ENCODE measurements at regions of chr14 and their contacts with region 1.

Region 1: GRCh38 chr14:61388173-61388975 is 67.0 kb downstream of the PRKCH start:
- DNase-seq: peak in 4 of 14 experiments; percentile 26 to 78 (median 62)
- ATAC-seq: peak; percentile 77
- H3K4me3 ChIP-seq: peak overlapping the region; percentile 25
- H3K4me3 Mint-ChIP-seq: no peak overlapping the region
- H3K27ac ChIP-seq: peak overlapping the region; percentile 72
- H3K27ac Mint-ChIP-seq: no peak overlapping the region
- H3K4me1 ChIP-seq: peaks cover 72% of the 10 kb centered on the region
- H3K4me1 Mint-ChIP-seq: peaks cover 39% of the 10 kb centered on the region
- H3K27me3 ChIP-seq: no peaks in the 10 kb centered on the region
- H3K27me3 Mint-ChIP-seq: no peaks in the 10 kb centered on the region
- CTCF ChIP-seq: no peak

Region 2: DNA sequence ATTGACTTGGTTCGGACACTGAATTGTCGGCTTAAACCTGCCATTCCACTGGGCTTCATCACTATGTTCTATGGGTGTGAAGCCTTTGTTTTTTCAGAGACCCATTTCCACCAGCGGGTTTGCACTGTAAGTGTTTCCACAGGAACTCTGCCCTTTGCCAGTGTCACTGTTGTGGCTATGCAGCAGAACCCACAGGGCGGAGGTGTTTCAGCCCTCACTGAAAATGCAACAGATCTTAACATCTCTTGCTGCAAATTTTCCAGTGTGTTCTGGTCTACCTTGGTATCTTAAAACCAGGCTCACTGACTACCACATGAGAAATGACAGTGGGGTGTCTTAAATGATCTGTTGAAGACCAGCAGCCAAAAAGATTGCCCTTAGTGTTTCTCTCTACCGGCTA is 45.9 kb before region 1 on chr14:
- CTCF ChIA-PET with region 1: interaction called, 5 read pairs
- POLR2A ChIA-PET with region 1: interaction called, 15 read pairs
- intact Hi-C with region 1: loop called in 1 of 2 experiments (anchors 1 kb)
- DNase-seq: peak; percentile 60 to 93 (median 76)
- ATAC-seq: peak; percentile 57
- H3K4me3 ChIP-seq: peak overlapping the region; percentile 23
- H3K4me3 Mint-ChIP-seq: peak overlapping the region; percentile 87
- H3K27ac ChIP-seq: peak overlapping the region; percentile 79 to 88
- H3K27ac Mint-ChIP-seq: peak overlapping the region; percentile 99
- H3K4me1 ChIP-seq: peaks cover 90% of the 10 kb centered on the region
- H3K4me1 Mint-ChIP-seq: peaks cover 92% of the 10 kb centered on the region
- H3K27me3 ChIP-seq: no peaks in the 10 kb centered on the region
- H3K27me3 Mint-ChIP-seq: no peaks in the 10 kb centered on the region
- CTCF ChIP-seq: no peak

Region 3: DNA sequence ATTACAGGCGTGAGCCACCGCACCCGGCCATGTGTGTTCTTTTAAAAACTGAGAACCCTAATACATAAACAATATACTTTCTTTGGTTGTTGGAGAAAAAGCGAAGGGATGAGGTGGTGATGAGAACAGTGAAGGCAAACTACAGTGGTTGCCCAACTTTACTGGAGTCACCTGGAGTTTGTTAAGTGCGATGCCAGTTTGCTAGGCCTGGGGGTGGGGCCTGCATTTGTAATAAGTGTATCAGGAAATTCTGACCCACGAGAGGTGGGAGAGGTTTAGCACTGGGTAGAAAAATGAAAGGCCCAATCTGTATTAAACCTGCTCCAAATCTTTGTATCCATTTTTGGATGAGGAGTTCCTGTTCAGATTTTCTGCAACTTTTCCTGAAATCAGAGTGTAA is 18.2 kb before region 1 on chr14:
- CTCF ChIA-PET with region 1: interaction called, 3 read pairs
- POLR2A ChIA-PET with region 1: interaction called, 7 read pairs
- intact Hi-C with region 1: loop called in 1 of 2 experiments (anchors 2 kb)
- DNase-seq: no peak
- ATAC-seq: no peak
- H3K4me3 ChIP-seq: no peak overlapping the region
- H3K4me3 Mint-ChIP-seq: peak overlapping the region; percentile 21
- H3K27ac ChIP-seq: peak overlapping the region in 1 of 2 donors; percentile 2
- H3K27ac Mint-ChIP-seq: peak overlapping the region; percentile 81
- H3K4me1 ChIP-seq: peaks cover 51% of the 10 kb centered on the region
- H3K4me1 Mint-ChIP-seq: peaks cover 34% of the 10 kb centered on the region
- H3K27me3 ChIP-seq: no peaks in the 10 kb centered on the region
- H3K27me3 Mint-ChIP-seq: no peaks in the 10 kb centered on the region
- CTCF ChIP-seq: no peak

Region 4: GRCh38 chr14:61403411-61403810 is 15.0 kb after region 1 on chr14:
- CTCF ChIA-PET with region 1: interaction called, 3 read pairs
- POLR2A ChIA-PET with region 1: interaction called, 33 read pairs
- intact Hi-C with region 1: loop called (anchors 1 to 2 kb)
- DNase-seq: peak in 5 of 14 experiments; percentile 14 to 80 (median 71)
- ATAC-seq: peak; percentile 80
- H3K4me3 ChIP-seq: peak overlapping the region; percentile 9
- H3K4me3 Mint-ChIP-seq: peak overlapping the region; percentile 84
- H3K27ac ChIP-seq: peak overlapping the region; percentile 23 to 77
- H3K27ac Mint-ChIP-seq: peak overlapping the region; percentile 80
- H3K4me1 ChIP-seq: peaks cover 63% of the 10 kb centered on the region
- H3K4me1 Mint-ChIP-seq: peaks cover 92% of the 10 kb centered on the region
- H3K27me3 ChIP-seq: no peaks in the 10 kb centered on the region
- H3K27me3 Mint-ChIP-seq: no peaks in the 10 kb centered on the region
- CTCF ChIP-seq: no peak

Region 5: DNA sequence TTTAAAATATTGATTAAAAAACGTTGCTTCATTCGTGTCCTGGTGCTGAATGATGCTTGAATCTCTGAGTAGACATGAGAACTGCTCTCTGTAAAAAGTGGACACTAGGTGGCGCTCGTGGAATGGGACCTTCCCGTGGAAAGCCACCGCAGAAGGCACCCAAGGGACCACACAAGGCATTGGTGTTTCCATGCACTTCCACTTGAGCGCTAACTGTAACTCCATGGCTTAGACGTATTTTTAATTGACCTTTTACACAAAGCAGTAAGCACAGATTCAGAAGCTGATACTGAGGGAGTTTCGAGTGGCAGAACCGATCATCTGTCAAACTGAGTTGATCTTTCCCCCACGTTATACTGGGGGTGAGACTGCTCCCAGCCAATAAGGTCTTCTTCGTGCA is 68.3 kb after region 1 on chr14:
- CTCF ChIA-PET with region 1: interaction called, 3 read pairs
- POLR2A ChIA-PET with region 1: interaction called, 6 read pairs
- intact Hi-C with region 1: loop called (anchors 5 kb)
- DNase-seq: peak; percentile 66 to 92 (median 81)
- ATAC-seq: peak; percentile 55
- H3K4me3 ChIP-seq: no peak overlapping the region
- H3K4me3 Mint-ChIP-seq: peak overlapping the region; percentile 71
- H3K27ac ChIP-seq: no peak overlapping the region
- H3K27ac Mint-ChIP-seq: peak overlapping the region; percentile 91
- H3K4me1 ChIP-seq: peaks cover 66% of the 10 kb centered on the region
- H3K4me1 Mint-ChIP-seq: peaks cover 92% of the 10 kb centered on the region
- H3K27me3 ChIP-seq: no peaks in the 10 kb centered on the region
- H3K27me3 Mint-ChIP-seq: no peaks in the 10 kb centered on the region
- CTCF ChIP-seq: peak; percentile 90

Region 6: DNA sequence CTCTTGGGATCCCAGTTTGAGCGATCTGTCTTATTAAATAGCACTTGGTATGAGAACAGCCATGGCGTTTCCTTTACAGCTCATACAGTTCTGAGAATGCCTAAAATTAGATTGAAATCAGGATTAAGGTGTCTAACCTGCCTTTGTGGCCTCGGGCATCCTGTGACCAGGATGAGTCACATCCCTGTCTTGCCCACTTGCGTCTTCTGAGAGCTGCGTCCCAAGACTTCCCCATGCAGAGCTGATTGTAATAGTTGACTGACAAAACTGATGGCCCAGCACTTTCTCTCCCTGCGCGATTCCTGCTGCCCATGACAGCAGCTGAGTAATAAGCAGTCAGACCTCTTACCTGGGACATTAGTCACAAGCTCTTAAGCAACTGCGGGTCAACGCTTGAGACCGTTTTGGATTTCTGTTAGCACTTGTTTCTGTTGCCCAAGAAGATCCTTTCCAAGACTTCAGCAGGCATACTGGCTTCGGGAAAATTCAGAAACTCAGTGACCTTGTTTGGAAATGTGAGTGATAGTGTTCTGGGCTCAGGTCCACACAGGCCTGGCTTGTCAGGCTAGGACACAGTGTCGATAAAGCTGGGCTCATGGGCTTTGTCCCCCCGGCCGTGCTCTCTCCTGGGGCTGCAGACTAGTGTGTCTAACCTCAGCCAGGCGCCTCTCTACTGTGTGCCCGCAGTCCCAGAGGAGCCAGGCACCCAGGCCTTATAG is 137.1 kb after region 1 on chr14:
- CTCF ChIA-PET with region 1: no interaction called
- POLR2A ChIA-PET with region 1: no interaction called
- intact Hi-C with region 1: no loop called
- DNase-seq: peak in 13 of 14 experiments; percentile 23 to 83 (median 42)
- ATAC-seq: peak; percentile 67
- H3K4me3 ChIP-seq: no peak overlapping the region
- H3K4me3 Mint-ChIP-seq: peak overlapping the region; percentile 12
- H3K27ac ChIP-seq: peak overlapping the region; percentile 8 to 42
- H3K27ac Mint-ChIP-seq: peak overlapping the region; percentile 52
- H3K4me1 ChIP-seq: peaks cover 48% of the 10 kb centered on the region
- H3K4me1 Mint-ChIP-seq: peaks cover 82% of the 10 kb centered on the region
- H3K27me3 ChIP-seq: no peaks in the 10 kb centered on the region
- H3K27me3 Mint-ChIP-seq: no peaks in the 10 kb centered on the region
- CTCF ChIP-seq: no peak